ENCODE measurements at regions of chr12 and their contacts with region 1.

Region 1: DNA sequence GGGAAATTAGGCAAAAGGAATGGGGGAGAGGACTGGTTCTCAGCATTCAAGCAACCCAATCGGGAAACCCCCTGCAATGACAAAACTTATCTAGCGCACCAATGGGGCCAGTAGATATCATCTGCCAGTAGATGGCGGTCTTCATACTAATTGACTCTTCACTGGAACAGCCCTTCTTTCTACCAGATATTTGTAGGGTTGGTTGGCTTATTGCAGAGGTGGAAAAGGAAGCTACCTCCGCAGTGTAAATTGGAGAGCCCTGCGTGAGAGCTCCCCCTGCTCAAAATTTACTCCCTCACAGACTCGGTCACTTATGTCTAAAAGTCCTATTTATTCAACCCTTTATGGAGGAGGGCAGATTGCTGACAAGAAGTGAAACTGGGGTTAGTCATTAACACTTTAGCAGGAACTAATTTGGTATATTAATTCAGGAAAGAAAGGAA is 166.1 kb upstream of the CCND2 start:
- DNase-seq: peak; percentile 78 to 87 (median 83)
- H3K4me3 ChIP-seq: no peak overlapping the region
- H3K4me3 Mint-ChIP-seq: peak overlapping the region in 7 of 8 donors; percentile 26 to 67 (median 47)
- H3K27ac ChIP-seq: no peak overlapping the region
- H3K27ac Mint-ChIP-seq: peak overlapping the region in 6 of 7 donors; percentile 80 to 94 (median 92)
- H3K4me1 ChIP-seq: peaks cover 10% of the 10 kb centered on the region
- H3K4me1 Mint-ChIP-seq: peaks cover 8 to 15% (median 11%) of the 10 kb centered on the region in 4 donors
- H3K27me3 ChIP-seq: no peaks in the 10 kb centered on the region
- H3K27me3 Mint-ChIP-seq: peaks cover 0 to 2% of the 10 kb centered on the region in 2 donors

Region 2: DNA sequence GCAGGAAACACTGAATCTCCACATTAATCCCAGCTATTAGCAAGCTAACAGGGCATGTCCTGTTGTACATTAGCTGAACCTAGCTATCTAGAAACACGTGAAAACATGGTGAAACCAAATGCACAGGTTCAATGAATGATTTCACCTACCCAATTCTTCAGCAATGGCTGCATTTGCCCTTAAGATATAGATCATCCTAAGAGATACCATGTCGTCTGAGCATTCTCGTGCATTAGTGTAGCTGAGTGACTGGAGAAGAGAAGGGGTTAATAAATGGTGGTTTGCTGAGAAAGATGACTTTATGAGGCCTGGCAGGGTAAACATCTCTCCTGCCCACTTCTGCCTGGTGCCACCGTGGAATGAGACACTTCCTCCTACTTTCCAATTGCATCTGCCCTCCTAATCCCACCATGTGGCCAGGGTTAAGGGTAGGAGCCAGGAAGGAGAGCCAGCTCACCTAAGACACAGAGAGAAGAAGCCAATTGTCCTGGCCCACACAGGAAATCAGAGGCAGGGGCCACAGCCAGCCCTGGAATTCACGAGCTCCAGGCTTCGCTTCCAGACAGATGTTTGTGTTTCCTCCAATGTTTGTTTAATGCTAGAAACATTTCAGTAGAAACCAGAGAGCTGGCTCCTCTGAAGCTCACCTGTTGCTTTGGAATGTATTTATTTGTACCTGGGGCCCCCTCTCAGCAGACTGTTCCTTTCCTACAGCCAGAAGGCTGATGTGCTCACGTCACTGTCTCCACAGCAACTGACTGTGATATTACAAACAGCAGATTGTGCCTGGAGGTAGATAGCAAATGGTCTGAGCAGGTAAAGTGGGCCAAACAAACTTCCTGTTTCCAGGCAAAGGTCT is 108.3 kb before region 1 on chr12:
- CTCF ChIA-PET with region 1: interaction called, 3 read pairs
- POLR2A ChIA-PET with region 1: no interaction called
- intact Hi-C with region 1: loop called (anchors 5 kb)
- DNase-seq: peak; percentile 39 to 60 (median 55)
- H3K4me3 ChIP-seq: no peak overlapping the region
- H3K4me3 Mint-ChIP-seq: peak overlapping the region in 1 of 8 donors; percentile 15
- H3K27ac ChIP-seq: no peak overlapping the region
- H3K27ac Mint-ChIP-seq: peak overlapping the region in 6 of 7 donors; percentile 70 to 87 (median 84)
- H3K4me1 ChIP-seq: peaks cover 9% of the 10 kb centered on the region
- H3K4me1 Mint-ChIP-seq: peaks cover 7 to 30% (median 20%) of the 10 kb centered on the region in 4 donors
- H3K27me3 ChIP-seq: no peaks in the 10 kb centered on the region
- H3K27me3 Mint-ChIP-seq: no peaks in the 10 kb centered on the region

Region 3: GRCh38 chr12:4056910-4057845 is 50.3 kb before region 1 on chr12:
- CTCF ChIA-PET with region 1: no interaction called
- POLR2A ChIA-PET with region 1: no interaction called
- intact Hi-C with region 1: no loop called
- DNase-seq: no peak
- H3K4me3 ChIP-seq: no peak overlapping the region
- H3K4me3 Mint-ChIP-seq: peak overlapping the region in 7 of 8 donors; percentile 17 to 74 (median 41)
- H3K27ac ChIP-seq: no peak overlapping the region
- H3K27ac Mint-ChIP-seq: peak overlapping the region in 3 of 7 donors; percentile 49 to 85 (median 76)
- H3K4me1 ChIP-seq: peaks cover 6% of the 10 kb centered on the region
- H3K4me1 Mint-ChIP-seq: peaks cover 10 to 30% (median 17%) of the 10 kb centered on the region in 4 donors
- H3K27me3 ChIP-seq: no peaks in the 10 kb centered on the region
- H3K27me3 Mint-ChIP-seq: no peaks in the 10 kb centered on the region

Region 4: DNA sequence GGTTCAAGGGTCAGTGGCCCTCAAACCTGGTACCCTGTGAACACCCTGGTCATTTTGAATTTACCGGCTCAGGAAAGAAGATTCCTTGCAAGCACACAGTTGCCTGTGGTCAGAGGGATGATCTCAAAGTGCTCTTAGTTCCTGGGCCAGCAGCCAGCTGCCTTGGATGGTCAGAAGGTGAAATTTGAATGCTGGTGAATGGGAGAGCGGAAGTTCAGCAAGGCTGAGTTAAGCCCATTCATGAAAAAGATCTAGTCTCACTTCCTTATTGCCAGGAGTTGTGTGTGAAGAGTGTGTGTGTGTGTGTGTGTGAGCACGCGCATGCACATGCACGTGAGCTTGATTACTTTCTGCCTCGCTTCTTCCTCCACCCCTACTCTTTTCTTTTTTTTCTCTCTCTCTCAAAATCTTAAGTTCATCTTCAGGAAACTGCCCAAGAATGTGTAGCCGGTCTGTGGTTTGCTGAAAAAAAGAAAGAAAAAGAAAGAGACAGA is 10.6 kb after region 1 on chr12:
- CTCF ChIA-PET with region 1: interaction called, 37 read pairs
- POLR2A ChIA-PET with region 1: interaction called, 6 read pairs
- intact Hi-C with region 1: no loop called
- DNase-seq: peak in 4 of 5 donors; percentile 34 to 45 (median 40)
- H3K4me3 ChIP-seq: no peak overlapping the region
- H3K4me3 Mint-ChIP-seq: peak overlapping the region; percentile 67 to 86 (median 80)
- H3K27ac ChIP-seq: no peak overlapping the region
- H3K27ac Mint-ChIP-seq: peak overlapping the region; percentile 31 to 92 (median 78)
- H3K4me1 ChIP-seq: peaks cover 50% of the 10 kb centered on the region
- H3K4me1 Mint-ChIP-seq: peaks cover 40 to 57% (median 45%) of the 10 kb centered on the region in 4 donors
- H3K27me3 ChIP-seq: no peaks in the 10 kb centered on the region
- H3K27me3 Mint-ChIP-seq: peaks cover 0 to 6% of the 10 kb centered on the region in 2 donors

Region 5: GRCh38 chr12:4141348-4142270 is 34.2 kb after region 1 on chr12:
- CTCF ChIA-PET with region 1: interaction called, 31 read pairs
- POLR2A ChIA-PET with region 1: interaction called, 12 read pairs
- intact Hi-C with region 1: loop called (anchors 1 kb)
- DNase-seq: no peak
- H3K4me3 ChIP-seq: no peak overlapping the region
- H3K4me3 Mint-ChIP-seq: peak overlapping the region in 7 of 8 donors; percentile 4 to 100 (median 97)
- H3K27ac ChIP-seq: peak overlapping the region; percentile 64
- H3K27ac Mint-ChIP-seq: peak overlapping the region; percentile 97 to 99 (median 98)
- H3K4me1 ChIP-seq: peaks cover 61% of the 10 kb centered on the region
- H3K4me1 Mint-ChIP-seq: peaks cover 36 to 82% (median 60%) of the 10 kb centered on the region in 4 donors
- H3K27me3 ChIP-seq: no peaks in the 10 kb centered on the region
- H3K27me3 Mint-ChIP-seq: no peaks in the 10 kb centered on the region

Region 6: GRCh38 chr12:4472046-4472445 is 364.6 kb after region 1 on chr12:
- CTCF ChIA-PET with region 1: no interaction called
- POLR2A ChIA-PET with region 1: no interaction called
- intact Hi-C with region 1: no loop called
- DNase-seq: no peak
- H3K4me3 ChIP-seq: no peak overlapping the region
- H3K4me3 Mint-ChIP-seq: no peak overlapping the region
- H3K27ac ChIP-seq: no peak overlapping the region
- H3K27ac Mint-ChIP-seq: no peak overlapping the region
- H3K4me1 ChIP-seq: no peaks in the 10 kb centered on the region
- H3K4me1 Mint-ChIP-seq: no peaks in the 10 kb centered on the region
- H3K27me3 ChIP-seq: no peaks in the 10 kb centered on the region
- H3K27me3 Mint-ChIP-seq: peaks cover 5 to 8% of the 10 kb centered on the region in 2 donors